Activated naive CD4-positive, alpha-beta T cell treated with anti-CD3 and anti-CD28 coated beads, Interleukin-2, amount 10 ng/mL, durations not matched to agents 7 days and 5 days (primary cell): ENCODE measurements at regions of chr10 and their contacts with region 1.

Region 1: DNA sequence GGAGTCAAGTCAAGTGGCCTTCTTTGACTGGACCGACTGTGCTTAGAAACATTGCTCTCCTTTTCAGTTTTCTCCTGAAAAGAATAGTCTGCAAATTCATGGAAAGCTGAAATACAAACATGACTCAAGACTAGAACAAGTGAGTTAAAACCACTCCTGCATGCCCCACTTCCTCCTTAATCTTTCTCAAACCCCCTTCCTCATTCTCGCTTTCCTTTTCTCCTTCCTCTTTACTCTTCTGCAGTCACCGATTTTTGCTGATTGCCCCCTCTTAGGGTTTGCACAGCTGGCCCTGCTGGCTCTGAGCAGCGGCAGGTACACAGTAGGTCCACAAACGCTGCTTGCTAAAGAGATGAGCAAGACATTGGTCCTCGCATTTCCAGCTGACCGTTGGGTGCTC is 34.8 kb upstream of the MKI67 start:
- DNase-seq: no peak
- H3K4me3 Mint-ChIP-seq: no peak overlapping the region
- H3K27ac Mint-ChIP-seq: no peak overlapping the region
- H3K4me1 Mint-ChIP-seq: peaks cover 22% of the 10 kb centered on the region
- H3K27me3 Mint-ChIP-seq: peaks cover 36% of the 10 kb centered on the region

Region 2: GRCh38 chr10:128178319-128178958 is 17.4 kb after region 1 on chr10:
- CTCF ChIA-PET with region 1: interaction called, 13 read pairs
- DNase-seq: peak; percentile 77
- H3K4me3 Mint-ChIP-seq: no peak overlapping the region
- H3K27ac Mint-ChIP-seq: no peak overlapping the region
- H3K4me1 Mint-ChIP-seq: peaks cover 44% of the 10 kb centered on the region
- H3K27me3 Mint-ChIP-seq: peaks cover 26% of the 10 kb centered on the region